Posterior vena cava (tissue), 2 donors: ENCODE measurements at regions of chr16 and their contacts with region 1.

Region 1: GRCh38 chr16:1609971-1610275 is 1.9 kb downstream of the IFT140 start:
- DNase-seq: no peak

Region 2: DNA sequence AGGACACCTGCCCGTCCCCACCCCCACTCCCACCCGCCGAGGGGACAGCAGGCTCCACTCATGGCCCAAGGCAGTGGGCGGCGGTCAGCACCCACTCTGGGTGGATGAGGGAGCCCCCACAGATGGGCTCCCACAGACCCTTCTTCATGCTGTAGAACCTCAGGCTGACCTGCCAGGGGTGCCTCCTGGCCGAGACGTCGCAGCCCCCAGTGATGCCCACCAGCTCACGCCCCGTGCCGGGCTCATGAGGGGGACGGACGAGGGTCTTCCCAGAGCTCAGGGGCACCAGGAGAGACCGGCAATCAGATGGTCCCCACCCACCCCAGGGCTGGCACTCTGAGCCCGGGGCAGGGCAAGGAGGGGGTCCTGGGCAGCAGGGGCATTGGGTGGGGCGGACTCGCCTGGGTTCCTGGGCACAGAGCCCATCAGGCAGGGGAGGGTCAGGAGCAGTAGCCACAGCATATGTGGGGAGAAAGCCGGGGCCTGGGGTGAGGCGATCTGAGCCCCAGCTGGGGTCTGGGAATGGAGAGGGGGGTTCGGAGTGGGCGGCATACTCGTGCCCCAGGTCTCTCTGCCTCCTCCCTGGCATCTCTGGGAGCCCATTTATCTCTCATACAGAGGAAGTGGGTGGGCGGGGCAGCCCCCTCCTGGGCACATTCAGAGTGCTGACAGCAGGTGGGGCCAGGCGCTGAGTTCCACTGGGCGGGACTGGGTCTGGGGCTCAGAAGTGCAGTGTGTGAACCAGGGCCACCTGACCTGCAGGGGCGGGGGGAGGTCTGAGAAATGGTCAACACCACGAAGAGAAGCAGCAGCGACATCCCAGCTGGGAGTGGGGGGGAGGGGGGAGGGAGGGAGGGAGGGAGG is 321.1 kb before region 1 on chr16:
- intact Hi-C with region 1: no loop called
- DNase-seq: no peak

Region 3: GRCh38 chr16:1543085-1543896 is 66.6 kb before region 1 on chr16:
- intact Hi-C with region 1: loop called in 1 of 2 experiments (anchors 10 kb)
- DNase-seq: peak; percentile 95

Region 4: DNA sequence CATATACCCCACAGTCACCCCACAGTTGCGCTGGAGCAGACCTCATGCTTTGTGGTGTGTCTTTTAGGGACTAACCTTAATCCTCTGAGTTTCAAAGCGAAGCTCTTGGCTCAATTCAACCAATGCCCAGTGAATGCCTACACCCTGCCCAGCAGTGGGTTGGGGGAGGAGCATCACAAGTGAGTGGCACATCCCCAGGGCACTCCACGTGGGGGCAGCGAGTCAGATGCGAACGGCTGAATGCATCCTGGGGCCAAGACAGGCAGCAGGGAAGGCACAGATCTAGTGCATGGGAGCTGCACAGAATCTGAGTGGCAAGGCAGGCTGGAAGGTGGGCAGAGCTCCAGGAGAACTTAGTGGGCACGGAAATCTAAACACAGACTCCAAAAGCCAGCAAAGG is 37.3 kb before region 1 on chr16:
- intact Hi-C with region 1: no loop called
- DNase-seq: no peak

Region 5: DNA sequence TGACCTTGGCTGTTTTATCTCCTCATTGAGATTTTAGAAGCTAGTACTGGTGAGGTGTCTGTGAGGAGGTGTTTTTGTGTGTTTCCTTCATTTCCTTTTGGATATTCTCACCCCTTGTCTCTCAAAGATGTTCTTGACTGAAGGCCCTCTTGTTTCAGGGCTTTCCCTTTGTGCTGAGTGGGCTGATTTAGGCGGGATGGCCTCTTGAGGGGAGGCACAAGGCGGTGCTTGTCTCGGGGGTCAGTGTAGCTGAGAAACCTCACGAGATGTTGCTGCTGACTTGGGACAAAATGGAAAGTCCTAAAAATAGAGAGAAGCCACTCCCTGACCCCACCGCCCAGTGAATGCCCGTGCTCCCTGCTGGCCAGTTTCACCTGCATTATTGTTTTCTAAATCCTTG is 16.4 kb after region 1 on chr16:
- intact Hi-C with region 1: no loop called
- DNase-seq: no peak

Region 6: DNA sequence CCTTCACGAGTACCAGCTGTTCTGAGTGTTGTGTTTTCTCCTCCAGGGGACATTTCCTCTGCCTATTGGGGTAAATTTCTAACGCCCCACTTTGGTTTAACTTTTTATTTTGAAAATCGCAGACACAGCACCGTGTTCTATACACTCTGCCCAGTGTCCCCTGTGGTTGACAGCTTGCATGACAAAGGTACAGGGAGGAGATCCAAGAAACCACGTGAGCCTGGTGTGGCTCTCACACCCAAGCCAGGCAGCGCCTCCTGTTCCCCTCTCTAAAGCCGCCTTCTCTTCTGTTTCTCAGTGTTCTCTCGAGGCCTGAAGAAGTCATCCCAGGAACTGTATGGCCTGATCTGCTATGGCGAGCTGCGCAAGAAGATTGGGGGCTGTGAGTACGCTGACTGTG is 27.6 kb after region 1 on chr16:
- intact Hi-C with region 1: loop called in 1 of 2 experiments (anchors 1 kb)
- DNase-seq: no peak